Caco-2 (cell line): ENCODE measurements at regions of chr3 and their contacts with region 1.

Region 1: DNA sequence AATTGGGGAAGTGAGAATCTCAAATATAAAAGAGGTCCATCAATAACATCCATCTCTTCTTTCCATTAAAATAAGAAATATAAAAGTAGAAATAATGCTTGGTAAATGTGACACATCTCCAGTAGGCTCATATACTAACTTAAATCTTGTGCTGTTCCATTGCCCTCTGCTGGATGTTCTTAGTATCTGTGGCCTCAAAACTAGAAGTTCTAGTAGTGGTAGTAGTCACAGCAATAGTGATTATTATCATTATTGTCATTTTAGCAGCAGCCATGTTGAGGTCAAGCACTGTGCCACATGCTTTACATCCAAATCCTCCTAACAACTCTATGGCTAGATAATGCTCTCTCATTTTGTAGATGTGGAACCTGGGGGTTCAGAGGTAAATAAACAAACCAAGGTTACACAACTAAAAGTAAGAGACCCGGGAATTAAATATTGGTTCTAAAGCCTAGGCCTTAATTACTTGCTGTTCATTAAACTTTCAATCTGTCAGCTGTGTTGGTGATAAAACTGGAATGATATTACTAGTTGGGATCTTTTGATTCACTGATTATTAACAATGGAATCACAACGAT is 20.2 kb upstream of the BTLA start:
- DNase-seq: peak; percentile 35 to 47
- H3K4me3 ChIP-seq: no peak overlapping the region
- H3K4me3 Mint-ChIP-seq: no peak overlapping the region
- H3K27ac Mint-ChIP-seq: no peak overlapping the region
- H3K4me1 ChIP-seq: no peaks in the 10 kb centered on the region
- H3K4me1 Mint-ChIP-seq: no peaks in the 10 kb centered on the region
- H3K27me3 ChIP-seq: no peaks in the 10 kb centered on the region
- H3K27me3 Mint-ChIP-seq: no peaks in the 10 kb centered on the region
- CTCF ChIP-seq: peak; percentile 67 to 74

Region 2: GRCh38 chr3:112437146-112438022 is 82.1 kb before region 1 on chr3:
- CTCF ChIA-PET with region 1: no interaction called
- POLR2A ChIA-PET with region 1: no interaction called
- intact Hi-C with region 1: loop called (anchors 1 kb)
- DNase-seq: peak in 1 of 2 experiments; percentile 18
- H3K4me3 ChIP-seq: no peak overlapping the region
- H3K4me3 Mint-ChIP-seq: no peak overlapping the region
- H3K27ac Mint-ChIP-seq: no peak overlapping the region
- H3K4me1 ChIP-seq: no peaks in the 10 kb centered on the region
- H3K4me1 Mint-ChIP-seq: no peaks in the 10 kb centered on the region
- H3K27me3 ChIP-seq: no peaks in the 10 kb centered on the region
- H3K27me3 Mint-ChIP-seq: peaks cover 6% of the 10 kb centered on the region
- CTCF ChIP-seq: peak; percentile 9 to 35

Region 3: GRCh38 chr3:112489674-112490479 is 29.6 kb before region 1 on chr3:
- CTCF ChIA-PET with region 1: no interaction called
- POLR2A ChIA-PET with region 1: no interaction called
- intact Hi-C with region 1: no loop called
- DNase-seq: no peak
- H3K4me3 ChIP-seq: no peak overlapping the region
- H3K4me3 Mint-ChIP-seq: no peak overlapping the region
- H3K27ac Mint-ChIP-seq: no peak overlapping the region
- H3K4me1 ChIP-seq: no peaks in the 10 kb centered on the region
- H3K4me1 Mint-ChIP-seq: no peaks in the 10 kb centered on the region
- H3K27me3 ChIP-seq: no peaks in the 10 kb centered on the region
- H3K27me3 Mint-ChIP-seq: no peaks in the 10 kb centered on the region
- CTCF ChIP-seq: no peak